ENCODE measurements at regions of chrX and their contacts with region 1.

Region 1: DNA sequence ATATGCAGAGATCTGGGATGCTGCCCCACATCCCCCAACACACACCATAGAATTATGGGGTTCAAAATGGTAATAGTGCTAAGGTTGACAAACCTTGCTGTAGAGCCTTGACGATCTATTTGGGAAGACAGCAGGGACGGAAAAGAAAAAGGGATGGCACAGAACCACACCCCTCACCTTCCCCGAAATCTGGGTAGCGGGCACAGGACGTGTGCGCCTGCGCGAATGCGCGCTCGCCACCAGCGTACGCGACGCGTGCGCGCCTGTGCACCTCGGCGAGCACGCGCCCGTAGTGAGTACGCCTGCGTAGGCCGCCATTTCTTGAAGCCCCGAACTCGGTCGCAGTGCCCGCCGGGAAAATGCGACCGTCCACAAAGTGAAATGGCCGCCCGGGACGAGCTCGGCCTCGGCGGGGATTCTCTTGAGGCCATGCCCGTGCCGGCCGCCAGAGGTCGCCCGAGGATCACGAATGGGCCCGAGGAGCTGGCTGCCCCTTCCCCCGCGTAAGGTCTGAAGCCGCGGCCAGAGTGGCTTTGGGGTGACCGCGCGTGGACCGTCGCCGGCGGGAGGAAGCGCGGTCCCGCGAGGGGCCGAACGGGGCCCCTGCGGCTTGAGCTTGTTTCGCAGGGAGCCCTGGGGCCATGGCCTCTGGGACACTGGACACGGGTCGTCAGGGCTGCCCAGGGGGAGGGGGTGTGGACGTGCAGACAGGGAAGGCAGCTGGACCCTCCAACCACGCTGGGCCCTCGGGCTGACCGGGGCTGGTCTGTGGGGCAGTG is 43.6 kb downstream of the ZNF185 start:
- DNase-seq: peak; percentile 93
- CTCF ChIP-seq: peak; percentile 68

Region 2: GRCh38 chrX:152958524-152959465 is 17.3 kb after region 1 on chrX:
- CTCF ChIA-PET with region 1: interaction called, 41 read pairs
- POLR2A ChIA-PET with region 1: no interaction called
- DNase-seq: peak; percentile 85
- CTCF ChIP-seq: peak; percentile 72

Region 3: GRCh38 chrX:153470435-153471363 is 529.2 kb after region 1 on chrX and contains the start of gene HAUS7:
- CTCF ChIA-PET with region 1: interaction called, 11 read pairs
- POLR2A ChIA-PET with region 1: no interaction called
- DNase-seq: peak; percentile 93
- CTCF ChIP-seq: peak; percentile 65

Region 4: GRCh38 chrX:153507484-153508178 is 566.1 kb after region 1 on chrX:
- CTCF ChIA-PET with region 1: interaction called, 43 read pairs
- POLR2A ChIA-PET with region 1: no interaction called
- DNase-seq: peak; percentile 89
- CTCF ChIP-seq: peak; percentile 70

Region 5: GRCh38 chrX:153662266-153662665 is 720.7 kb after region 1 on chrX:
- CTCF ChIA-PET with region 1: interaction called, 22 read pairs
- POLR2A ChIA-PET with region 1: no interaction called
- DNase-seq: peak; percentile 17
- CTCF ChIP-seq: peak; percentile 43